ENCODE measurements at regions of chr4 and their contacts with region 1.

Region 1: DNA sequence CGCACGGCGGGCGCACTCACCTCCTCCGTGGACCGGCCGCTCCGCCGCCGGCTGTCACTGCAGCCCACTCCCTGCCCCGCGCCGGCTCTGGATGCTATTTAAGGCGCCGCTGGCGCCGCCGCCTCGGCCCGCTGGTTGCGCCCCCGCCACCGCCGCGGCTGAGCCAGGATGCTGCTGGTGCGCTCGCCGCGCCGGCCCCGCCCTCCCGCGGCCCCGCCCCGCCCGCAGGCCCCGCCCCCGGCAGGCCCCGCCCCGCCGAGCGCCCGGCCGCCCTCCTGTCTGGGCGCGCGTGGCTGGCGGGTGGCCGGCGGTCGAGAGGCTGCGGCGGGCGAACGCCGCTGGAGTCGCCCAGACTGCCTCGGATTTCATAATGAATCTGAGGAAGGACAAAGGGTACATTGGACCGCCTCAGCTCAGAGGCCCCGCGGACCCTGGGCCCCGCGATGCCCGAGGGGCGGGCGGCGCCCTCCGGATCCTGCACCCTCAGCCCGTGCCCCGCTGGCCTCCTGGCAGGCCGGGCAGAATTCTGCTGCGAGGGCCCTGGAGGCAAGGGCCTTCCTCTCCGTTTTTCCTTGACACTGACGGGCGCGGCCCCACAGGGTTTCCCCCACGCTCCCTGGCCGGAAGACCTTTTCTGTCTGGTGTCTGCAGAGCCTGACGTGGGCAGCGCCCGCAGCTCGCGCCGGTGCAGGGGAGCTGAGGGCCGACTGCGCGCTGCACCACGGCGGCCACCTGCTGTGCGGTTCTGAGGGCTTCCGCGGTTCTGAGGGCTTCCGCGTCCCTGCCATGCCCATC is at the start of gene ACSL1:
- DNase-seq: peak; percentile 48
- H3K4me3 ChIP-seq: peak within 1 kb of the TSS; percentile 43 to 62 (median 51)
- H3K27ac ChIP-seq: peak within 1 kb of the TSS; percentile 40
- H3K4me1 ChIP-seq: peaks cover 13% of the 10 kb centered on the region
- H3K27me3 ChIP-seq: peaks cover 0 to 2% of the 10 kb centered on the region in 2 experiments
- CTCF ChIP-seq: no peak
- POLR2A ChIP-seq: no peak
- total RNA-seq, gene ACSL1: 17.7 and 18.9 TPM in 2 replicates

Region 2: DNA sequence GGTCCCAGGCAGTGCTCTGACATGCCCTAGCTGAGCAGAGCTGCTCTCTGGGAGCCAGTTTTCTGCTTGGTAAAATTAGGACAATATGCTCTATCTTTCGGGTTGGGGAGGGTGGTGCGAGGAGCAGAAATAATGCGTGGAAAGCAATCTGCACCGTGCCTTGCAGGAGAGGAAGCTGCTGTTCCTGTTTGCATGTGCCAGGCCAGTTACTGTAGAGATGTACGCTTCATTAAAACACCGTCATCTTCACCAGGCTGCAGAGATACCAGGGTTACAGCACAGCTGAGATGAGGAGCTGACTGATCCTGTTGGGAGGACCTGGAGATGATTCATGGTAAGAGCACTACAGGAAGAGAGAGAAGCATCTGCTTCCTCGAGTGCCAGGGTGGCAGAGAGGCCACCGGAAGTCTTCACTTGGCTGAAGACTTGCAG is 322.2 kb before region 1 on chr4:
- CTCF ChIA-PET with region 1: no interaction called
- POLR2A ChIA-PET with region 1: no interaction called
- dilution Hi-C with region 1: no loop called
- intact Hi-C with region 1: no loop called
- DNase-seq: peak; percentile 20
- H3K4me3 ChIP-seq: no peak overlapping the region
- H3K27ac ChIP-seq: no peak overlapping the region
- H3K4me1 ChIP-seq: peaks cover 7% of the 10 kb centered on the region
- H3K27me3 ChIP-seq: no peaks in the 10 kb centered on the region
- CTCF ChIP-seq: no peak
- POLR2A ChIP-seq: no peak

Region 3: DNA sequence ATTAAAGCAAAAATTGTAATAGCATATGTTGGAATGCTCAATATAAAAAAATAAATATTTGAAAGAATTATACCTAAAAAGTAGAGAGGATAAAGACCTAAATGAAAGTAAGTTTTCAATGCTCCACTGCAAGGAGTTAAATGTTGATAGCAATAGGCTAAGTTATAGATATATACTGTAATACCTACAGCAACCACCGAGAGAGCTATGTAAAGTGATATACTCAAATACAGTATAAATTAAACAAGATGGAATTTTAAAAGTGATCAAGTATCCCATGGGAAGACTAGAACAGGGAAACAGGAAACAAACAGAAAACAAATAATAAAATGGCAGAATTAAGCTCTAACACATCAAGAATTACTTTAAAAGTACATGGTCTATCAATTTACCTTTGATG is 250.8 kb before region 1 on chr4:
- CTCF ChIA-PET with region 1: no interaction called
- POLR2A ChIA-PET with region 1: no interaction called
- dilution Hi-C with region 1: no loop called
- intact Hi-C with region 1: loop called (anchors 10 kb)
- DNase-seq: peak; percentile 13
- H3K4me3 ChIP-seq: peak overlapping the region in 1 of 3 experiments; percentile 47
- H3K27ac ChIP-seq: peak overlapping the region; percentile 73
- H3K4me1 ChIP-seq: peaks cover 20% of the 10 kb centered on the region
- H3K27me3 ChIP-seq: no peaks in the 10 kb centered on the region
- CTCF ChIP-seq: no peak
- POLR2A ChIP-seq: no peak

Region 4: GRCh38 chr4:184733654-184734524 is 92.2 kb before region 1 on chr4 and contains the start of gene CENPU:
- CTCF ChIA-PET with region 1: interaction called, 3 read pairs
- POLR2A ChIA-PET with region 1: no interaction called
- dilution Hi-C with region 1: no loop called
- intact Hi-C with region 1: loop called (anchors 1 kb)
- DNase-seq: peak; percentile 99
- H3K4me3 ChIP-seq: peak within 1 kb of the TSS; percentile 75 to 91 (median 88)
- H3K27ac ChIP-seq: peak within 1 kb of the TSS; percentile 72
- H3K4me1 ChIP-seq: peaks cover 16% of the 10 kb centered on the region
- H3K27me3 ChIP-seq: no peaks in the 10 kb centered on the region
- CTCF ChIP-seq: no peak
- POLR2A ChIP-seq: peak; percentile 68
- total RNA-seq, gene CENPU: 35.6 and 37.9 TPM in 2 replicates

Region 5: GRCh38 chr4:185115827-185116232 is 289.7 kb after region 1 on chr4:
- CTCF ChIA-PET with region 1: no interaction called
- POLR2A ChIA-PET with region 1: no interaction called
- dilution Hi-C with region 1: no loop called
- intact Hi-C with region 1: loop called (anchors 5 kb)
- DNase-seq: peak; percentile 51
- H3K4me3 ChIP-seq: no peak overlapping the region
- H3K27ac ChIP-seq: no peak overlapping the region
- H3K4me1 ChIP-seq: peaks cover 9% of the 10 kb centered on the region
- H3K27me3 ChIP-seq: no peaks in the 10 kb centered on the region
- CTCF ChIP-seq: no peak
- POLR2A ChIP-seq: no peak

Region 6: DNA sequence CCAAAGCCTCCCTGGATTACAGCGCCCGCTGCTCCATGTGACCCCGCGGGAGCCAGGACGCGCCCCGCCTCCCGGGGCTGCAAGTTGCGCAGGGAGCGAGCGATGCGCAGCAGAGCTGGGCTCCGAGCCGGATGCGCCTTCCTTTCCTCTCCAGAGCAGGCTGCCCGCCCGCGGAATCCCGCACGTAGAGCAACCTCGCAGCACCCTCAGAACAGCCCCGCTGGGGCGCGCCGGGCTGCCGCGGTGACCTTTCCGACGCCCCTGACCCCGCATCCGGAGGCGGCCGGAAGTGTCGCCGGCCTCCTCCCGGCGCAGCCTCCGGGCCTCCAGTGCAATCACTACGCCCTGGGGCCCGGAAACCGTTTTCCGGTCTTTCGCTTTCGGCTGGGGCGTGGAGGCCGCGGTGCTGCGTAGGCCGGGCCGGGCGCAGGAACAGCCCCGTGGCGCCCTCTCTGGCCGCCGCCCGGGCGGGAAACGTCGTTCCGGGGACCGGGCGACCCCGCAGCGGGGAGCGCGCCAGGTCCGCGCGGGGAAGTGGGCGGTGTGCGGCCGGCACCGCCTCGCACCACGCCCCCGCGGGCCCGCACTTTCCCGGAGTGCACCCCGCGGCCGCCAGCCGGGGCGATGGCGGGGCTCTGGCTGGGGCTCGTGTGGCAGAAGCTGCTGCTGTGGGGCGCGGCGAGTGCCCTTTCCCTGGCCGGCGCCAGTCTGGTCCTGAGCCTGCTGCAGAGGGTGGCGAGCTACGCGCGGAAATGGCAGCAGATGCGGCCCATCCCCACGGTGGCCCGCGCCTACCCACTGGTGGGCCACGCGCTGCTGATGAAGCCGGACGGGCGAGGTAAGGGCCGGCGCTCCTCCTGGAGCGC is 1365.3 kb after region 1 on chr4 and contains the start of gene CYP4V2:
- CTCF ChIA-PET with region 1: no interaction called
- POLR2A ChIA-PET with region 1: no interaction called
- dilution Hi-C with region 1: no loop called
- intact Hi-C with region 1: loop called (anchors 10 kb)
- DNase-seq: peak; percentile 28
- H3K4me3 ChIP-seq: peak within 1 kb of the TSS; percentile 56 to 74 (median 68)
- H3K27ac ChIP-seq: no peak within 1 kb of the TSS
- H3K4me1 ChIP-seq: peaks cover 8% of the 10 kb centered on the region
- H3K27me3 ChIP-seq: peaks cover 4 to 6% of the 10 kb centered on the region in 2 experiments
- CTCF ChIP-seq: peak; percentile 24 to 31
- POLR2A ChIP-seq: no peak
- total RNA-seq, gene CYP4V2: 1.7 and 3.1 TPM in 2 replicates

Measured in endothelial cell of umbilical vein (primary cell).